A673 (cell line): ENCODE measurements at regions of chr18 and their contacts with region 1.

Region 1: GRCh38 chr18:8525692-8526091 is 83.5 kb upstream of the RAB12 start:
- DNase-seq: no peak
- H3K4me3 ChIP-seq: no peak overlapping the region
- H3K27ac ChIP-seq: no peak overlapping the region
- H3K4me1 ChIP-seq: no peaks in the 10 kb centered on the region
- H3K27me3 ChIP-seq: peaks cover 55% of the 10 kb centered on the region
- CTCF ChIP-seq: 0 out of 2 replicates have a peak, but pooled peaks have one; percentile 22

Region 2: GRCh38 chr18:7185701-7186100 is 1340.0 kb before region 1 on chr18:
- CTCF ChIA-PET with region 1: no interaction called
- POLR2A ChIA-PET with region 1: no interaction called
- intact Hi-C with region 1: no loop called
- DNase-seq: no peak
- H3K4me3 ChIP-seq: no peak overlapping the region
- H3K27ac ChIP-seq: no peak overlapping the region
- H3K4me1 ChIP-seq: no peaks in the 10 kb centered on the region
- H3K27me3 ChIP-seq: no peaks in the 10 kb centered on the region
- CTCF ChIP-seq: no peak

Region 3: GRCh38 chr18:9454061-9454703 is 928.5 kb after region 1 on chr18:
- CTCF ChIA-PET with region 1: no interaction called
- POLR2A ChIA-PET with region 1: interaction called, 17 read pairs
- intact Hi-C with region 1: no loop called
- DNase-seq: no peak
- H3K4me3 ChIP-seq: no peak overlapping the region
- H3K27ac ChIP-seq: no peak overlapping the region
- H3K4me1 ChIP-seq: no peaks in the 10 kb centered on the region
- H3K27me3 ChIP-seq: no peaks in the 10 kb centered on the region
- CTCF ChIP-seq: no peak